ENCODE measurements at regions of chr7 and their contacts with region 1.

Region 1: GRCh38 chr7:155020996-155021395 is 18.1 kb upstream of the PAXIP1 start:
- DNase-seq: no peak
- ATAC-seq: no peak
- H3K4me3 Mint-ChIP-seq: no peak overlapping the region
- H3K27ac Mint-ChIP-seq: no peak overlapping the region
- H3K4me1 Mint-ChIP-seq: no peaks in the 10 kb centered on the region
- H3K27me3 Mint-ChIP-seq: peaks cover 8% of the 10 kb centered on the region

Region 2: GRCh38 chr7:154584352-154585252 is 436.4 kb before region 1 on chr7:
- CTCF ChIA-PET with region 1: no interaction called
- POLR2A ChIA-PET with region 1: no interaction called
- DNase-seq: no peak
- ATAC-seq: no peak
- H3K4me3 Mint-ChIP-seq: no peak overlapping the region
- H3K27ac Mint-ChIP-seq: no peak overlapping the region
- H3K4me1 Mint-ChIP-seq: no peaks in the 10 kb centered on the region
- H3K27me3 Mint-ChIP-seq: no peaks in the 10 kb centered on the region

Region 3: DNA sequence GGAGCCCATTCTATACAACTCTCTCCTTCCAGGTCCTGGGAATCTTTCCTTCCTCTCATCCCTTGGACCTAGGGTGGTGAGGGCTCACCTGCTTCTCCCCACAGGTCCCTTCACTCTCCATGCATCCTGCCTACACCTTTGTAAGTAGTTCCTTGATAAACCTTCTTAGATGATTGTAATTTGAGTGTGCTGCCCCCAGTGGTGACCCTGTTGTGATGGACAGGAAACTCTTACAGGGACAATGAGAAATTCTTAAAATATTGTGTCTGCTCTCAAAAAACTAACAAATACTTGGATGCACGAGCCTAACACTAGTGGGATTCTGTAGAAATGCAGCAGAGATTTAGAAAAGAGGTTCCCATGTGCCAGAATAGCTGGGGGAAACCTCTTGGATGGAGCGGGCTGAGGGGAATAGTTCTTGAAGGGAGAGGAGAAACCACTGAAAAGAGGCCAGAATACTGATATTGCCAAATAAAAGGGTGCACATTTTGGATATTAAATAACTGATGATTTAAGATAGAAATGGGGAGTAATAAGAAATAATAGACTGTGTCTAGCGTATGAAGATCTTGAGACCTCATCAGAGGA is 11.3 kb before region 1 on chr7:
- CTCF ChIA-PET with region 1: interaction called, 25 read pairs
- POLR2A ChIA-PET with region 1: no interaction called
- DNase-seq: peak; percentile 53
- ATAC-seq: peak; percentile 58
- H3K4me3 Mint-ChIP-seq: no peak overlapping the region
- H3K27ac Mint-ChIP-seq: no peak overlapping the region
- H3K4me1 Mint-ChIP-seq: peaks cover 3% of the 10 kb centered on the region
- H3K27me3 Mint-ChIP-seq: peaks cover 2% of the 10 kb centered on the region